Activated CD4-positive, alpha-beta T cell treated with anti-CD3 and anti-CD28 coated beads, Interleukin-2, amount 10 ng/mL, durations not matched to agents 24 days and 14 days (primary cell): ENCODE measurements at regions of chr11 and their contacts with region 1.

Region 1: GRCh38 chr11:110376711-110377324 is 52.9 kb upstream of the FDX1 start:
- DNase-seq: peak; percentile 82
- H3K4me3 Mint-ChIP-seq: no peak overlapping the region
- H3K27ac Mint-ChIP-seq: no peak overlapping the region
- H3K4me1 Mint-ChIP-seq: peaks cover 24% of the 10 kb centered on the region
- H3K27me3 Mint-ChIP-seq: no peaks in the 10 kb centered on the region

Region 2: GRCh38 chr11:109946322-109946846 is 430.4 kb before region 1 on chr11:
- intact Hi-C with region 1: loop called (anchors 1 kb)
- DNase-seq: peak; percentile 89
- H3K4me3 Mint-ChIP-seq: peak overlapping the region; percentile 34
- H3K27ac Mint-ChIP-seq: peak overlapping the region; percentile 17
- H3K4me1 Mint-ChIP-seq: peaks cover 10% of the 10 kb centered on the region
- H3K27me3 Mint-ChIP-seq: peaks cover 17% of the 10 kb centered on the region

Region 3: GRCh38 chr11:110195845-110196754 is 180.7 kb before region 1 on chr11:
- intact Hi-C with region 1: loop called (anchors 1 kb)
- DNase-seq: no peak
- H3K4me3 Mint-ChIP-seq: no peak overlapping the region
- H3K27ac Mint-ChIP-seq: no peak overlapping the region
- H3K4me1 Mint-ChIP-seq: peaks cover 14% of the 10 kb centered on the region
- H3K27me3 Mint-ChIP-seq: peaks cover 28% of the 10 kb centered on the region

Region 4: GRCh38 chr11:110314366-110315095 is 62.3 kb before region 1 on chr11:
- intact Hi-C with region 1: no loop called
- DNase-seq: no peak
- H3K4me3 Mint-ChIP-seq: no peak overlapping the region
- H3K27ac Mint-ChIP-seq: no peak overlapping the region
- H3K4me1 Mint-ChIP-seq: peaks cover 8% of the 10 kb centered on the region
- H3K27me3 Mint-ChIP-seq: peaks cover 6% of the 10 kb centered on the region

Region 5: GRCh38 chr11:110327508-110327907 is 49.3 kb before region 1 on chr11:
- intact Hi-C with region 1: loop called (anchors 2 kb)
- DNase-seq: no peak
- H3K4me3 Mint-ChIP-seq: peak overlapping the region; percentile 88
- H3K27ac Mint-ChIP-seq: peak overlapping the region; percentile 96
- H3K4me1 Mint-ChIP-seq: peaks cover 19% of the 10 kb centered on the region
- H3K27me3 Mint-ChIP-seq: no peaks in the 10 kb centered on the region

Region 6: GRCh38 chr11:110453684-110454354 is 77.0 kb after region 1 on chr11:
- intact Hi-C with region 1: loop called (anchors 1 kb)
- DNase-seq: no peak
- H3K4me3 Mint-ChIP-seq: peak overlapping the region; percentile 47
- H3K27ac Mint-ChIP-seq: peak overlapping the region; percentile 43
- H3K4me1 Mint-ChIP-seq: peaks cover 39% of the 10 kb centered on the region
- H3K27me3 Mint-ChIP-seq: no peaks in the 10 kb centered on the region